Activated naive CD4-positive, alpha-beta T cell treated with anti-CD3 and anti-CD28 coated beads for 36 hours (primary cell): ENCODE measurements at regions of chr9 and their contacts with region 1.

Region 1: DNA sequence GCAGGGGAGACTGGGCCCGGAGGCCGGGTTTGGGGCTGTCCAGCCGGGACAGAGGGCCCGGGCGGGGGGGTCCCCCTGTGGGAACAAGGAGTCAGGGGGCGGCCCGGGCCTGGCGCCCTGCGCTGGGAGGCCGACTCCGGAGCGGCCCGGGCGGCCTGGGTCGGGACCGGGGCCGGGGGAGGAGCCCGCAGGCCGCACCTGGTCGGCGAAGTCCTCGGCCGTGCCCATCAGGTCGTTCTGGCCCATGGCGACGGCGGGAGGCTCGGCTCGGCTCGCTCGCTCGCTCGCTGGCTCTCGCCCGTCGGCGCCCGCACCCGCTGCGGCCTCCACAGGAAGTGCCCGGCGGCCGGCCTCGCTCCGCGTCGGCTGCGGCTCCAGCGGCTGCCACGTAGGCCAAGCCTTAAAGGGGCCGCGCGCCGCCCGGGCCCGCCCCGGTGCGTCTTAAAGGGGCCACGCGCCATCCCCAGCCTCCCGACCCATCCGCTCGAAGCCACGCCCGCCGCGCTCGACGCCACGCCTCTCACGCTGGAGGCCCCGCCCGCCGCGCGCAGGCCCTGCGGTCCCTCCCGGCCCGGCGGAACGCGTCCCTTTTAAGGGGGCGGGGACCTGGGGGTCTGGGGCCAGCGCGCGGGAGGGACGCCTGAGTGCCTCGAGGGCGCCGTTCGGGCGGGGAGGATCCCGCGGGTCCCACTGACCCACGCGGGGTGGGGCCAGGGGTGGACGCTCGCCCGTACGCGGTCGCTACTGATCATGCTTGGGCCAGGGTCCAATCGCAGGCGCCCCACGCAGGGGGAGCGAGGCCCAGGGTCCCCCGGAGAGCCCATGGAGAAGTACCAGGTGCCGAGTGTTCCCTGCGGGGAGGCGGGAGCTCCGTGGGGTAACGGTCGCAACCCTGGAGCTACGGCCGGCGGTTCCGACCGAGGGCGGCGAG is at the starts of genes STKLD1 and SURF4:
- DNase-seq: peak; percentile 96
- H3K4me3 Mint-ChIP-seq: peak within 1 kb of the TSS; percentile 98
- H3K27ac Mint-ChIP-seq: peak within 1 kb of the TSS; percentile 97
- H3K4me1 Mint-ChIP-seq: peaks cover 33% of the 10 kb centered on the region
- H3K27me3 Mint-ChIP-seq: no peaks in the 10 kb centered on the region
- total RNA-seq, gene STKLD1: 0.35 to 0.41 TPM
- total RNA-seq, gene SURF4: 299 to 302 TPM

Region 2: GRCh38 chr9:133048569-133048968 is 327.4 kb before region 1 on chr9:
- CTCF ChIA-PET with region 1: no interaction called
- intact Hi-C with region 1: no loop called
- DNase-seq: peak; percentile 49
- H3K4me3 Mint-ChIP-seq: no peak overlapping the region
- H3K27ac Mint-ChIP-seq: no peak overlapping the region
- H3K4me1 Mint-ChIP-seq: peaks cover 4% of the 10 kb centered on the region
- H3K27me3 Mint-ChIP-seq: no peaks in the 10 kb centered on the region

Region 3: GRCh38 chr9:133133681-133134418 is 242.1 kb before region 1 on chr9:
- CTCF ChIA-PET with region 1: no interaction called
- intact Hi-C with region 1: loop called (anchors 5 kb)
- DNase-seq: peak; percentile 96
- H3K4me3 Mint-ChIP-seq: peak overlapping the region; percentile 38
- H3K27ac Mint-ChIP-seq: peak overlapping the region; percentile 96
- H3K4me1 Mint-ChIP-seq: peaks cover 70% of the 10 kb centered on the region
- H3K27me3 Mint-ChIP-seq: no peaks in the 10 kb centered on the region

Region 4: DNA sequence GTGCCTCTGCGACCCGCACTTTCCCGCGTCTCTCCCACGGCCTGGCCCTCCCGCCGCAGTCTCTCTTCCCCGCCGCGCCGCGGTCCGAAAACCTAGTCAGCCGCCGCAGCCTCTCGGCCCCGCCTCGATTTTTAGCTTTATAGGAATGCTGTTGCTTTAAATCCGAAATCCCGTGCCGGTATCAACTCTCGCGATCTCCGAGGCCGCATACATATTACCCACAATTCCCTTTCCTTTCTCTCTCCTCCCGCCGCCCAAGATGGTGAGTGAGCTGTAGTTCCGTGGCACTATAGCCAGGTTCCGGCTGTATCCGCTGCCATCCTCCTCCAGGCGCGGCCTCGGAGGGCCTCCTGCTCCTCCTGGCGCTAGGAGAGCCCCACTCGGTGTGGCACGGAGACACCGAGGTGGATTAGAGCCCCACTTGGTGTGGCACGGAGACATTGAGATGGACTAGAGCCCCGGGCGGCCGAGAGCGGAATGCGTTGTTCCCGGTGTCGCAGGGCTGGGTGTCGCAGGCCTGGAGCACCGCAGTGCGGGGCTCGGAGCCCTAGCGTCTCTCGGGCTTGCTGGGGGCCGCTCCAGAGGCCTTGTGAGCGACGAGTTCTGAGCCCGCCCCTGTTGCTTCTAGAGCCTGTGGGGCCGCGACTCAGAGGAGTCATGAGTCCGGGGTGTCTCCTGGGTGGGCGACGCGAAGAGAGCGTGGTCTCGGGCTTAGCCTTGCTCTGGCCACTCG is 27.8 kb before region 1 on chr9 and contains the starts of genes MED22 and RPL7A:
- CTCF ChIA-PET with region 1: interaction called, 16 read pairs
- intact Hi-C with region 1: loop called (anchors 1 kb)
- DNase-seq: peak; percentile 97
- H3K4me3 Mint-ChIP-seq: peak within 1 kb of the TSS; percentile 92
- H3K27ac Mint-ChIP-seq: peak within 1 kb of the TSS; percentile 97
- H3K4me1 Mint-ChIP-seq: peaks cover 37% of the 10 kb centered on the region
- H3K27me3 Mint-ChIP-seq: no peaks in the 10 kb centered on the region
- total RNA-seq, gene MED22: 18.4 to 21.5 TPM
- total RNA-seq, gene RPL7A: 3,985 to 4,111 TPM

Region 5: DNA sequence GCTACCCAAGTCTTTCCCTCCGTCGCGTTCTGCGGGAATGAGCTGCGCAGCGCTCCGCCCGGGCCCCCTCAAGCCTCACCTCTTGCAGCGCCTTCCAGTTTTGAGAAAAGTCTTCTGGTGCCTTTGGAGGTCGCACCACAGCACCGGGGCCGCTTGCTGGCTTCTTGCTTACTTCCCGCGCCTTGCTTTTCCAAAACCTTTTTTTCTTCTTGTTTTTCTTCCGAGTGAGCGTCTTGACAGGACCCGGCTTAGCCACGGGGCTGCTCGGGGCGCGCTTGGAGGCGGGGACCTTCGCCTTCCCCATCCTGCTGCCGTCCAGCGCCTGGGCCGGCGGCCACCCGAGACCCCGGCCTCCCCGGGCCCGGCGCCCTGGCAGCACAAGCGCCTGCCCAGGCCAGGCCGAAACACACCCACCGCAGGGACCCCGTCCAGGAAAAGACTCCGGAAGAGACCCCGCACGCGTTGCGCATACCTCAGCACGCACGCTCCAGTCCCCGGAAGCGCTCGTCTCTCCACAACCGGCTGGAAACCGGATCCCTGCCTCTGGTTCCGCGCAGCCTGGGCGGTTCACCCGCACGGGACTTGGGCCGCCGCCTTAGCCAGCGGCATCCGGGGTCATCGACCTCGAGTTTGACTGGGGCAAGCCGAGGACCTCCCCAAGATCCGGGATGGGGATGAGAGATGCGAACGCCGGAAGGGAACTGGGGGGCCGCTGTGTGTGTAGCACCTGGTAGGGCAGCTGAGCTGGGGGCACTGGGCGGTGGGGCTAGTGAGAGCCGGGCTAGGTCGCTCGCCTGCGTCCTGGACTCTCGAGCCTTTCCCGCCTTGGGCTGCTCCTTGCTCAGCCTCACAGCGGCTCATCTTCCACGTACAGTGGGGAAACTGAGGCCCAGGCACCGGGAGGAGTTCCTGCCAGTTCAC is 41.8 kb after region 1 on chr9 and contains the start of gene REXO4:
- CTCF ChIA-PET with region 1: interaction called, 4 read pairs
- intact Hi-C with region 1: loop called (anchors 2 kb)
- DNase-seq: peak; percentile 86
- H3K4me3 Mint-ChIP-seq: peak within 1 kb of the TSS; percentile 92
- H3K27ac Mint-ChIP-seq: peak within 1 kb of the TSS; percentile 91
- H3K4me1 Mint-ChIP-seq: peaks cover 54% of the 10 kb centered on the region
- H3K27me3 Mint-ChIP-seq: no peaks in the 10 kb centered on the region
- total RNA-seq, gene REXO4: 22.5 to 27.0 TPM

Region 6: DNA sequence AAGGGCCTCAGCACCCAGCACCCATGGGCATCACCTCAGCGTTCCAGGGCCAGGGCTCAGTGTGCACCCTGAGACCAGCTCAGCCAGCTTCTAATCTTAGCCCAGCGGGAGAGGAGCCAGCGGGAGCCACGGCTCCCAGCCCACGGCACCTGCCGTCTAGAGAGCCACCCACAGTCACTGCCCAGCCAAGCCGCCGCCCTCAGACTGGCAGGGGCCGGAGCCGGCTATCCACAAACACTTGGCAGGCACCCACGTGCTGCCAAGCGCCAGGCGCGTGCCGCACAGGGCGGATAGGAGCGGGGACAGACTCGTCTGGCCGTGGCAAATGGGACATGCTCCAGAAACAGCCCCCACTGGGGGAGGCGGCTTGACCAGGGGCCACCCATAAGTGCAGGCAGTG is 673.2 kb after region 1 on chr9:
- CTCF ChIA-PET with region 1: no interaction called
- intact Hi-C with region 1: no loop called
- DNase-seq: no peak
- H3K4me3 Mint-ChIP-seq: no peak overlapping the region
- H3K27ac Mint-ChIP-seq: no peak overlapping the region
- H3K4me1 Mint-ChIP-seq: no peaks in the 10 kb centered on the region
- H3K27me3 Mint-ChIP-seq: no peaks in the 10 kb centered on the region